Naive thymus-derived CD4-positive, alpha-beta T cell (primary cell): ENCODE measurements at regions of chr12 and their contacts with region 1.

Region 1: DNA sequence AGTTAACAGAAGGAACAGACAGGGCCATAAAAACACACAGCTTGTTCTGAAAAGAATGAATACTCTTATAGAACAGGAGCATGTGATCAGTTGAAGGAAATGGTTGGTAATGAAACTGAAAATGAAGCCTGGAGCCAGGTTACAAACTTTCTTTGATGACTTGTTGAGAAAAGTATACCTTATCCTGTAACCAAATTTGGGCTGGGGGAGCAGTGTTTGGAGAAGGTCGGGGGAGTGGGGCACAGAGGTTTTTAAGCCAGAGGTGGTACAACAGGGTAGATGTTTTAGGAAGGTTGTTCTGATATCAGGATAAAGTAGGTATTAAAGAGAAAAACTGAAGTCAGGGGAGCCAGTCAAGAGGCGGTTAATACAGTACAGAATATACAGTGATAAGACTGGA is 8.2 kb downstream of the GOLT1B start:
- DNase-seq: peak in 6 of 9 donors; percentile 16 to 45 (median 38)
- ATAC-seq: peak; percentile 84
- H3K4me3 ChIP-seq: no peak overlapping the region
- H3K4me3 Mint-ChIP-seq: peak overlapping the region; percentile 17 to 87 (median 72)
- H3K27ac ChIP-seq: peak overlapping the region; percentile 55
- H3K27ac Mint-ChIP-seq: peak overlapping the region; percentile 81 to 96 (median 92)
- H3K4me1 ChIP-seq: peaks cover 0 to 9% of the 10 kb centered on the region in 2 donors
- H3K4me1 Mint-ChIP-seq: peaks cover 20 to 51% (median 39%) of the 10 kb centered on the region in 7 donors
- H3K27me3 ChIP-seq: no peaks in the 10 kb centered on the region
- H3K27me3 Mint-ChIP-seq: no peaks in the 10 kb centered on the region

Region 2: DNA sequence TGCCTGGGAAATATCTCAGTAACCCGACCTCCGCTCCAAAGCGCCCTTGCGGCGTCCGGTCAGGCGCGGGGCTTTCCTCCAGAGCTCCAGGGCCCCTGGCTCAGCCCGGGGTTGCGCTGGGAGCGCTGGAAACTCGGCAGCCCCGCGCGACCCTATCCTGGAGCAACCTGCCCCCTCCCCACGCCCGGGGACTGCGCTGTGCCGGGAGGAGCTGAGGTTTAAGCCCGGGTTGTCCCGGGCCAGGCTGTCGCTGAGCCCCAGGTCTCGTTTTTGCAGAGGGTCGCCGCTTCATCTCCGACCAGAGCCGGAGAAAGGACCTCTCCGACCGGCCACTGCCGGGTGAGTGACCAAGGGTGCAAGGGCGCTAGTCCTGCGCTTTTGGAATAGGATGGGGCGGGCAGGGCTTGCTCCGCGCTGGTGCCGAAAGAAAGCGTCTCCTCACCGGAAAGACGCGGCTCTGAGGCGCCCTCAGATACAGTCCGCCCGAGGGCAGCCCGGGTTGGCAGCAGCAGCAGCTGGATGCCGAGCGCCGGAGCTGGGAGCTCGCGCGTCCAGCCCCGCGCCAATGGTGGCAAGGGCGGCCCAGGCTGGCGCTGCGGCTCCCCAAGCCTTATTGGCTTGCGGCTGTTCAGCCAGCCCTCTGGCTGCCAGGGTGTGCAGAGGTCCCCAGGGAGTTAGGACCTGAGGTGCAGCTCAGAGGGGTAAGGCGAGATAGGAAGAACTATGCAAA is 17.8 kb after region 1 on chr12:
- CTCF ChIA-PET with region 1: no interaction called
- POLR2A ChIA-PET with region 1: interaction called, 5 read pairs
- intact Hi-C with region 1: loop called in 1 of 2 experiments (anchors 2 kb)
- DNase-seq: peak; percentile 33 to 69 (median 61)
- ATAC-seq: peak; percentile 95
- H3K4me3 ChIP-seq: peak overlapping the region; percentile 63
- H3K4me3 Mint-ChIP-seq: peak overlapping the region; percentile 69 to 87 (median 80)
- H3K27ac ChIP-seq: no peak overlapping the region
- H3K27ac Mint-ChIP-seq: no peak overlapping the region
- H3K4me1 ChIP-seq: peaks cover 0 to 3% of the 10 kb centered on the region in 2 donors
- H3K4me1 Mint-ChIP-seq: peaks cover 0 to 13% (median 8%) of the 10 kb centered on the region in 7 donors
- H3K27me3 ChIP-seq: no peaks in the 10 kb centered on the region
- H3K27me3 Mint-ChIP-seq: peaks cover 18 to 54% (median 37%) of the 10 kb centered on the region in 5 donors